T-cell (primary cell): ENCODE measurements at regions of chr4 and their contacts with region 1.

Region 1: GRCh38 chr4:172311682-172312081 is 498.5 kb downstream of the GALNTL6 start:
- DNase-seq: no peak
- ATAC-seq: no peak
- H3K4me3 ChIP-seq: no peak overlapping the region
- H3K4me3 Mint-ChIP-seq: no peak overlapping the region
- H3K27ac ChIP-seq: no peak overlapping the region
- H3K27ac Mint-ChIP-seq: no peak overlapping the region
- H3K4me1 ChIP-seq: no peaks in the 10 kb centered on the region
- H3K4me1 Mint-ChIP-seq: no peaks in the 10 kb centered on the region
- H3K27me3 ChIP-seq: no peaks in the 10 kb centered on the region
- H3K27me3 Mint-ChIP-seq: no peaks in the 10 kb centered on the region

Region 2: GRCh38 chr4:172287117-172287516 is 24.6 kb before region 1 on chr4:
- CTCF ChIA-PET with region 1: no interaction called
- POLR2A ChIA-PET with region 1: no interaction called
- DNase-seq: no peak
- ATAC-seq: no peak
- H3K4me3 ChIP-seq: no peak overlapping the region
- H3K4me3 Mint-ChIP-seq: no peak overlapping the region
- H3K27ac ChIP-seq: no peak overlapping the region
- H3K27ac Mint-ChIP-seq: no peak overlapping the region
- H3K4me1 ChIP-seq: no peaks in the 10 kb centered on the region
- H3K4me1 Mint-ChIP-seq: no peaks in the 10 kb centered on the region
- H3K27me3 ChIP-seq: no peaks in the 10 kb centered on the region
- H3K27me3 Mint-ChIP-seq: no peaks in the 10 kb centered on the region

Region 3: GRCh38 chr4:172344314-172344944 is 32.7 kb after region 1 on chr4:
- CTCF ChIA-PET with region 1: interaction called in 1 of 2 experiments, 10 read pairs
- POLR2A ChIA-PET with region 1: no interaction called
- DNase-seq: no peak
- ATAC-seq: no peak
- H3K4me3 ChIP-seq: no peak overlapping the region
- H3K4me3 Mint-ChIP-seq: no peak overlapping the region
- H3K27ac ChIP-seq: no peak overlapping the region
- H3K27ac Mint-ChIP-seq: no peak overlapping the region
- H3K4me1 ChIP-seq: no peaks in the 10 kb centered on the region
- H3K4me1 Mint-ChIP-seq: no peaks in the 10 kb centered on the region
- H3K27me3 ChIP-seq: no peaks in the 10 kb centered on the region
- H3K27me3 Mint-ChIP-seq: no peaks in the 10 kb centered on the region